ENCODE measurements at regions of chr4 and their contacts with region 1.

Region 1: GRCh38 chr4:106315968-106316772 is at the starts of genes AIMP1 and TBCK:
- DNase-seq: peak; percentile 83
- H3K4me3 Mint-ChIP-seq: no peak within 1 kb of the TSS
- H3K27ac Mint-ChIP-seq: no peak within 1 kb of the TSS
- H3K4me1 Mint-ChIP-seq: peaks cover 30% of the 10 kb centered on the region
- H3K27me3 Mint-ChIP-seq: no peaks in the 10 kb centered on the region
- total RNA-seq, gene AIMP1: 86.4 and 86.9 TPM in 2 replicates
- total RNA-seq, gene TBCK: 24.4 and 25.1 TPM in 2 replicates

Region 2: DNA sequence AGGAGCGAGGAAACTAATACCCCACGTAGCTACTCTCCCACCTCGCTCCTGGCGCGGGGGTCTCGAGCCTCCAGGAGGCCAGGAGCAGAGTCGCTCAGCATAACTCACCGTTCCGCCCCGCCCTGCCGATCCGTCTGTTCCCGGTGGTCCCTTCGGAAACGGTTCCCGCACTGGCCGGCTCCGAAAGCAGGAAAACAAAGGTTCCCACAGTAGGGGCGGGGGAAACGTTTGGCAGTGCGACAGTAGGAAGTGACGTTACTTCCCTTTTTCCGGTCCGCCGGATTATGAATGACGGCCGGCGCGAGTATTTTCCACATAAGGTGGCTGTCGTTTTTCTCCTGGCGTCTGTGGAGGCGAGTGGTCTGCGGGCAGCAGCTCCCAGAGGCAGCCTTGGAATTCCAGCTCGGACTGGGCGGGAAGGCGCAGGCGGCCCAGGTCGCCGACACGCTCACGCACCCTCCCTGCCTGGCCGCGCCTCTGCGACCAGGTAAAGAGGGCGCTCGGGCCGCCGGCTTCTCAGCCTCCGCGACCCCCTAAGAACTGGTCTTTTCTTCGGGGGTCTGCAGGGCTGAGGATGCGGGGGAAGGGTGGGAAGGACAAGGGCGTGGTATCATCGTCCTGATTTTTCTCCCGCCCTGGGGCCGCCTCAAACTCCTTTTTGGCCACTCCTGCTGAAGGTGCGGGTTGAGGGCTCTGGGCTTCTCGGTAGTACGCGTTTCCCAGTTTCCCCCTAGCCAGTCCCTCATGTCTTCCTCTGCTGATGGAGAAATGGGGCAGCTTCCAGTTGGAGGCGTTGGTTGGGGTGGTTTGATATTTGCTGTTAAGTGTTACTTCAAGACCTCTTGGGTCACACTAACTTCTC is 607.4 kb before region 1 on chr4 and contains the starts of genes GSTCD and INTS12:
- intact Hi-C with region 1: loop called (anchors 1 kb)
- DNase-seq: peak; percentile 83
- H3K4me3 Mint-ChIP-seq: peak within 1 kb of the TSS; percentile 99
- H3K27ac Mint-ChIP-seq: peak within 1 kb of the TSS; percentile 95
- H3K4me1 Mint-ChIP-seq: peaks cover 21% of the 10 kb centered on the region
- H3K27me3 Mint-ChIP-seq: no peaks in the 10 kb centered on the region
- total RNA-seq, gene GSTCD: 17.0 and 20.9 TPM in 2 replicates
- total RNA-seq, gene INTS12: 18.7 and 22.4 TPM in 2 replicates

Region 3: GRCh38 chr4:106172861-106173260 is 143.3 kb before region 1 on chr4:
- intact Hi-C with region 1: no loop called
- DNase-seq: no peak
- H3K4me3 Mint-ChIP-seq: no peak overlapping the region
- H3K27ac Mint-ChIP-seq: no peak overlapping the region
- H3K4me1 Mint-ChIP-seq: no peaks in the 10 kb centered on the region
- H3K27me3 Mint-ChIP-seq: no peaks in the 10 kb centered on the region

Region 4: DNA sequence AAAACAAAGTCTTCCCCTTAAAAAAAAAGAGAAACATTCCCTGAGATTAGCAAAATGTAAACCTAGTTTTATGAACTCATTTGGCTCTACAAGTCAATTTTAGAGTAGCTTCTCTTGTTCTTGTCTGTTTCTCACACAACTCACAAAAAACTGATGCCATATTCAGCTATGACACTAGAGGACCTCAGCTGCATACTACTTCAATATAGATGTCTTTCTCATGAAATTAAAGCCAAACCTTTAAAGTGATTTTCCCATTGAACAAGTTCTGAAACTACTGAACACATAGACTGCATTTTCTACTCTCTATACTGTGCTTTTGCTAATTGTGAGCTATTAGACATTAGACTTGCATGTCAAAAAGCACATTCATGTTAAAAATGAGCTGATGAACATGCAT is 50.0 kb before region 1 on chr4:
- intact Hi-C with region 1: loop called (anchors 2 kb)
- DNase-seq: no peak
- H3K4me3 Mint-ChIP-seq: no peak overlapping the region
- H3K27ac Mint-ChIP-seq: no peak overlapping the region
- H3K4me1 Mint-ChIP-seq: no peaks in the 10 kb centered on the region
- H3K27me3 Mint-ChIP-seq: no peaks in the 10 kb centered on the region

Region 5: GRCh38 chr4:106329041-106329618 is 13.0 kb after region 1 on chr4:
- intact Hi-C with region 1: loop called (anchors 2 kb)
- DNase-seq: no peak
- H3K4me3 Mint-ChIP-seq: no peak overlapping the region
- H3K27ac Mint-ChIP-seq: no peak overlapping the region
- H3K4me1 Mint-ChIP-seq: no peaks in the 10 kb centered on the region
- H3K27me3 Mint-ChIP-seq: no peaks in the 10 kb centered on the region

Region 6: GRCh38 chr4:106629268-106629625 is 313.1 kb after region 1 on chr4:
- intact Hi-C with region 1: no loop called
- DNase-seq: no peak
- H3K4me3 Mint-ChIP-seq: no peak overlapping the region
- H3K27ac Mint-ChIP-seq: no peak overlapping the region
- H3K4me1 Mint-ChIP-seq: no peaks in the 10 kb centered on the region
- H3K27me3 Mint-ChIP-seq: no peaks in the 10 kb centered on the region

Region 7: DNA sequence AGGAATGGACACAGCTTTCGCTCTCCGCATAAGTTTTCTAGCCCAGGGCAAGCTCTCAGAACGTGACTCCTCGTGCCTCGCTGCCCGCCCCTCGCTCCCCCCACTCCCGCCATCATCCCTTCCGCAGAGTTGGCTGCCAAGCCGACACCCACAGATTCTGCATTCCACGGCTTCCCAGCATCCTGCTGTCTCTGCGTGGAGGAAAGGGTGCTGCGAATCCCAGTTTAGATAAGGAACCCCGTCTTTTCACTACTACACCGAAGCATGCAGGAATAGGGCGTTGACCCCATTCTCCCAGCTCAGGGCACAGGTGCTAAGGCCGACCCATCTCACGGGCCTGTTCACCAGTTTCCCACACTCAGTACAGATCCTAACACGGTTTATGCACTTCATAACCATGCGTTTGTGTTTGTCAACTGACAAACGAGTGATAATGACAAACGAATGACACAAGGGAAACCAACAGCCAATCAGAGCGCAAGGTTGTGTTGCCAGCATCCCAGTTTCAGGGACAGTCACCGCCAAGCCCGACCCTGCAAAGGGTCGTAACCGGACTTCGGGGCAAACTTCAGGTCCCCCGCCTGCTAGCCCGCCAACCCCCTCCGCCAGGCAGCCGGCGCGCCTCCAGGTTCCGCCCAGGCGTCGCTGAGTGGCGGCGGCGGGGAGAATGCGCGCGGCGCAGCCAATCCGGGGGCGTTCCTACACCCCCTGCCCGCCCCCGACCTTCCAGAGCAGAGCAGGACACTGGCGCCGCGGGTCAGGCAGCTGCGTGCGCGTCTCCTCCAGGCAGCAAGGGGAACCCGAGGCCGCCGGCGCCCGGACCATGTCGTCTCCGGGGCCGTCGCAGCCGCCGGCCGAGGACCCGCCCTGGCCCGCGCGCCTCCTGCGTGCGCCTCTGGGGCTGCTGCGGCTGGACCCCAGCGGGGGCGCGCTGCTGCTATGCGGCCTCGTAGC is 1614.9 kb after region 1 on chr4 and contains the start of gene CYP2U1:
- intact Hi-C with region 1: loop called (anchors 10 kb)
- DNase-seq: peak; percentile 81
- H3K4me3 Mint-ChIP-seq: peak within 1 kb of the TSS; percentile 86
- H3K27ac Mint-ChIP-seq: peak within 1 kb of the TSS; percentile 82
- H3K4me1 Mint-ChIP-seq: peaks cover 20% of the 10 kb centered on the region
- H3K27me3 Mint-ChIP-seq: peaks cover 2% of the 10 kb centered on the region
- total RNA-seq, gene CYP2U1: 1.1 and 1.5 TPM in 2 replicates